SK-N-SH (cell line): ENCODE measurements at regions of chr15 and their contacts with region 1.

Region 1: GRCh38 chr15:64162870-64163658 is at the start of gene PPIB:
- DNase-seq: peak; percentile 98
- H3K4me3 ChIP-seq: peak within 1 kb of the TSS; percentile 71 to 85
- H3K27ac ChIP-seq: peak within 1 kb of the TSS; percentile 79 to 83
- H3K4me1 ChIP-seq: peaks cover 23 to 25% of the 10 kb centered on the region in 2 experiments; a peak in 3 of 4 replicates
- H3K27me3 ChIP-seq: no peaks in the 10 kb centered on the region
- CTCF ChIP-seq: peak; percentile 54
- EP300 ChIP-seq: peak in 1 of 2 experiments; percentile 66; a peak in 1 of 4 replicates
- RAD21 ChIP-seq: peak; percentile 84
- polyA plus RNA-seq, gene PPIB: 1,358 and 1,379 TPM in 2 replicates

Region 2: DNA sequence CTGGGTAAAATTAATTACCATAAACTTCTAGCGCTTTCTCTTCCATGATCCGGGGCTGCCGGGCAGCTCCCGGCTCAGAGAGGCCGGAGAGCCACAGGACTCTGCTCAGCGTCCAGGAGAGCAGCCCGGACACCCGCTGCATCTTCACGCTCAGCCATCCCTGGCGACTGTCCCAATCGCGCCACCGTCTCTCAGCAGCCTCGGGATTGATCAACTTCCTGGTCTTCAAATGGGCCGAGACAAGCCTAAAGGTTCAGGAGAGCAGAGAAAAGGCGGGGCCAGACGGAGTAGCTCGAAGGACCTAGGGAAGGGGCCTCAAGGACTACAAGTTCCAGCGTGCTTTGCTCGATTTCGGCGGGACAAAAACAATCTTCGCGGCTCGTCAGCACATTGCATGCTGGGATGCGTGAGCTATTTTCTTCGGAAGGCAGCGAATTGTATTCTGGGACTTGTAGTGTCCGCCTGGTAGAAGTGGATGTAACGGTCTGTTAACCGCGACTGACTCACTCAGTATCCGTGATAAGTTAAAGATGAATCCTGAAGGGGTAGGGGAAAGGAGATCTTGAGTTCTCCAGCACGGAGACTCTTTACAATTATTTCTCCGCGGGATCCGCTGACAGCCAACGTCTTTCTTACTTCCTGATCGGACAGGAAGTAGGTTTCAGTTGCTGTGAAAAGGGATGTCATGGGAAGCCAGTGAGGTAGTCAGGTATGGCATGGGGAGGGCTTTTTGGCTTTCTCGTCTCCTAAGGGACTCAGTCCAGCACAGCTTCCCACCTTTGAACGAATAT is 69.2 kb before region 1 on chr15 and contains the start of gene CIAO2A:
- CTCF ChIA-PET with region 1: no interaction called
- POLR2A ChIA-PET with region 1: interaction called, 11 read pairs
- DNase-seq: peak; percentile 81
- H3K4me3 ChIP-seq: peak within 1 kb of the TSS; percentile 91 to 99
- H3K27ac ChIP-seq: peak within 1 kb of the TSS; percentile 94 to 98
- H3K4me1 ChIP-seq: peaks cover 17 to 23% of the 10 kb centered on the region in 2 experiments; a peak in 3 of 4 replicates
- H3K27me3 ChIP-seq: no peaks in the 10 kb centered on the region
- CTCF ChIP-seq: no peak
- EP300 ChIP-seq: no peak
- RAD21 ChIP-seq: no peak
- polyA plus RNA-seq, gene CIAO2A: 53.0 and 65.3 TPM in 2 replicates

Region 3: DNA sequence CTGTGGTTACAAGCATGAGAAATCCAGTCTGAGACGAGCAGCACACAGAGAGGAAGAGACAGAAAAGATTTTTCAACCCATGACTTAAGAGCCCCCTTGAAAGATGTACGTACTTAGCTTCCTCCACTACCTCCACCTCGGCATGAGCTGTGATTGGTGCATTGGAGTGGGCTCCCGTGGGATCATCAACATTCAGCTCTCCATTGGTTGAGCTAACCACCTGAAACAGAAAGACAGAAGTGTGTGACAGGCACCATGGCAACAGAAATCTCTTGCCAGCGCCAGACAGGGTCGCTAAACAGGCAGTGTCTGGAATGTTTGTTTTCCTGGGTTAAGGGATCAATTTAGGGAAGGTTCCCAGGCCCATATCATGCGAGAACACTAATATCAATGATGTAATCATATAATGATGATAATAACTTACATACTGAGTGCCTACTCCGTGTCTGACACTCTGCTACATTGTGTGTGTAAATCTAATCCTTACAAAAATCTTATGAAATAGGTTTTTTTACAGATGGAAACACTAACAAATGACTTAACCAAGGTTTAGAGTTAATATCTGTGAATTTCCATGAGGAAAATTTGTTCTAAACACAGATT is 17.3 kb after region 1 on chr15:
- CTCF ChIA-PET with region 1: interaction called, 14 read pairs
- POLR2A ChIA-PET with region 1: interaction called, 4 read pairs
- DNase-seq: peak; percentile 53
- H3K4me3 ChIP-seq: no peak overlapping the region
- H3K27ac ChIP-seq: peak overlapping the region in 1 of 2 experiments; percentile 67; a peak in 2 of 4 replicates
- H3K4me1 ChIP-seq: peaks cover 0 to 22% of the 10 kb centered on the region in 2 experiments; a peak in 2 of 4 replicates
- H3K27me3 ChIP-seq: no peaks in the 10 kb centered on the region
- CTCF ChIP-seq: no peak
- EP300 ChIP-seq: no peak
- RAD21 ChIP-seq: no peak

Region 4: GRCh38 chr15:64355944-64356709 is 193.1 kb after region 1 on chr15 and contains the start of gene CSNK1G1:
- CTCF ChIA-PET with region 1: interaction called, 13 read pairs
- POLR2A ChIA-PET with region 1: no interaction called
- DNase-seq: peak; percentile 93
- H3K4me3 ChIP-seq: peak within 1 kb of the TSS; percentile 66 to 74
- H3K27ac ChIP-seq: peak within 1 kb of the TSS; percentile 81 to 85
- H3K4me1 ChIP-seq: peaks cover 3 to 5% of the 10 kb centered on the region in 2 experiments; a peak in 3 of 4 replicates
- H3K27me3 ChIP-seq: no peaks in the 10 kb centered on the region
- CTCF ChIP-seq: peak; percentile 68
- EP300 ChIP-seq: no peak
- RAD21 ChIP-seq: peak; percentile 75
- polyA plus RNA-seq, gene CSNK1G1: 10.2 and 14.2 TPM in 2 replicates

Region 5: DNA sequence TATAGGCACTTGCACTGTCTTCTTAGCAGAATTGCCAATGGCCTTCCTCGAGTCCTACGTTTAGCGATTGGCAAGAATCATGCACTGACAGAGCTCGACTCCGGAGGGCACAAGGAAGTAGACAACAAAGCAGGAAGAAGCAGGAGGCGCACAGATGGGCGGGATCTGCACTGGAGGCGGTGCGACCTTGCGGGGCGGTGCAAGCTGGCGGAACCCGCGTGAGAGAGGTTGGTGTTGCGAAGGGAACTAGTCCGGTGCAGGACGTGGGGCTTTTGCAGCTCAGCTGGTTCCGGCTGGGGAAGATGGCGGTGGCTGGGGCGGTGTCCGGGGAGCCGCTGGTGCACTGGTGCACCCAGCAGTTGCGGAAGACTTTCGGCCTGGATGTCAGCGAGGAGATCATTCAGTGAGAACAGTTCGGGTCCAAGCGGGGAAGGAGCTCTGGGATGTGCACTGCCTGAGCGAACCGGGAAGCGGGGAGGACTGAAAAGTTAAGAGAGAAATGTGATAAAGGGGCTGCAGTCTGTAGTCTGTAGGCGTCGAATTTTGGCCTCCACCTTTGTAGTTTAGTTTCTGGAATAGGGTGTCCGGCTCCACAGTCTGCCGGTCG is 224.6 kb after region 1 on chr15 and contains the start of gene TRIP4:
- CTCF ChIA-PET with region 1: interaction called, 5 read pairs
- POLR2A ChIA-PET with region 1: interaction called, 17 read pairs
- DNase-seq: peak; percentile 92
- H3K4me3 ChIP-seq: peak within 1 kb of the TSS; percentile 68 to 98
- H3K27ac ChIP-seq: peak within 1 kb of the TSS; percentile 74 to 81
- H3K4me1 ChIP-seq: peaks cover 0 to 3% of the 10 kb centered on the region in 2 experiments; a peak in 1 of 4 replicates
- H3K27me3 ChIP-seq: no peaks in the 10 kb centered on the region
- CTCF ChIP-seq: peak; percentile 19; the same call in 1 of the 2 replicates
- EP300 ChIP-seq: peak in 1 of 2 experiments; percentile 50; a peak in 1 of 4 replicates
- RAD21 ChIP-seq: peak; percentile 45; the same call in 1 of the 2 replicates
- polyA plus RNA-seq, gene TRIP4: 14.5 and 20.3 TPM in 2 replicates